Mucosa of descending colon (tissue), 3 donors: ENCODE measurements at regions of chr16 and their contacts with region 1.

Region 1: GRCh38 chr16:85607321-85607765 is 5.8 kb upstream of the GSE1 start:
- DNase-seq: peak in 2 of 3 donors; percentile 58 to 67
- ATAC-seq: peak; percentile 3
- H3K4me3 ChIP-seq: no peak overlapping the region
- H3K4me1 ChIP-seq: peaks cover 60% of the 10 kb centered on the region
- CTCF ChIP-seq: no peak

Region 2: DNA sequence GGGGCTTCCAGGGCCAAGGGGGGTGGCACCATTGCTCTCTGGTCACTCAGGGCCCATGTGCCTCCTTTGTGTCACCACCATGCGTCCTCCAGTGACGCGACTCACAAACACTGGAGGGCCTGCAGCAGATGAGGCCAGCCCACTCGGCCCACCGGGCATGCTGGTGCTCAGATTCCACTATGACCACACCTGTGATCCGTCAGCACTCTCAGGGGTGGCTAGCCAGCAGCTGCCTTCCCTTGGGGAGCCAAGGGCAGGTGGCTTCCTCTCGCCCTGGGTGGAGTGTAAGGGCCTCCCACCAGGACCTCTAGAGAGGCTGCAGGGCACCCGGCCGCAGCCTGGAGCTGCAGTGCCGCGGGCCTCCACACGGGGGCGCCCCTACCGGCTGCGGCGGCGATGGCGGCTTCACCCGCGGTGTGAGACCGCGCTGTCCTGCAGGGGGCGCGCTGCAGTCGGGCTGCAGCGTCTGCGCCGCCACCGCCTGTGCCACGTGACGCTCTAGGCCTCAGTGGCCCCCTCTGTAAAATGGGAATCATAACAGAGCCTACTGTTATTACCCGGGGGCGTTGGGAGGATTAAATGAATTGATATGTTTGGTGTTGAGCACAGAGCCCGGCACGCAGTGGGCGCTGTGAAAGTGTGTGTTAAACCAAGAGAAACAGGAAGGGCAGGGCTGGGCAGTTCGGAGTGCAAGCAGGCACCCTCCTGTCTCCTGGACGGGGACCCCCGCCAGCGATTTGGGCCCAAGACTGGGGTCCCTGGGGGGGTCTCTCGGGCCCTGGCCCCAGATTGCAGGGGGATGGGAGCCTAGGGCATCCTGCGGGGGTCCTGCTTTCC is 186.6 kb before region 1 on chr16:
- intact Hi-C with region 1: loop called in 1 of 2 experiments (anchors 5 kb)
- DNase-seq: peak; percentile 70 to 87 (median 80)
- ATAC-seq: peak; percentile 76
- H3K4me3 ChIP-seq: no peak overlapping the region
- H3K4me1 ChIP-seq: peaks cover 19% of the 10 kb centered on the region
- CTCF ChIP-seq: peak; percentile 100

Region 3: GRCh38 chr16:85569615-85570212 is 37.6 kb before region 1 on chr16:
- intact Hi-C with region 1: loop called in 1 of 2 experiments (anchors 5 kb)
- DNase-seq: peak in 2 of 3 donors; percentile 57 to 62
- ATAC-seq: no peak
- H3K4me3 ChIP-seq: no peak overlapping the region
- H3K4me1 ChIP-seq: peaks cover 74% of the 10 kb centered on the region
- CTCF ChIP-seq: no peak

Region 4: GRCh38 chr16:85735225-85735635 is 127.9 kb after region 1 on chr16:
- intact Hi-C with region 1: no loop called
- DNase-seq: peak in 2 of 3 donors; percentile 51 to 79
- ATAC-seq: peak; percentile 69
- H3K4me3 ChIP-seq: no peak overlapping the region
- H3K4me1 ChIP-seq: no peaks in the 10 kb centered on the region
- CTCF ChIP-seq: no peak

Region 5: GRCh38 chr16:86281421-86281820 is 674.1 kb after region 1 on chr16:
- intact Hi-C with region 1: no loop called
- DNase-seq: no peak
- ATAC-seq: no peak
- H3K4me3 ChIP-seq: no peak overlapping the region
- H3K4me1 ChIP-seq: no peaks in the 10 kb centered on the region
- CTCF ChIP-seq: no peak